Endothelial cell of umbilical vein (primary cell): ENCODE measurements at regions of chr20 and their contacts with region 1.

Region 1: DNA sequence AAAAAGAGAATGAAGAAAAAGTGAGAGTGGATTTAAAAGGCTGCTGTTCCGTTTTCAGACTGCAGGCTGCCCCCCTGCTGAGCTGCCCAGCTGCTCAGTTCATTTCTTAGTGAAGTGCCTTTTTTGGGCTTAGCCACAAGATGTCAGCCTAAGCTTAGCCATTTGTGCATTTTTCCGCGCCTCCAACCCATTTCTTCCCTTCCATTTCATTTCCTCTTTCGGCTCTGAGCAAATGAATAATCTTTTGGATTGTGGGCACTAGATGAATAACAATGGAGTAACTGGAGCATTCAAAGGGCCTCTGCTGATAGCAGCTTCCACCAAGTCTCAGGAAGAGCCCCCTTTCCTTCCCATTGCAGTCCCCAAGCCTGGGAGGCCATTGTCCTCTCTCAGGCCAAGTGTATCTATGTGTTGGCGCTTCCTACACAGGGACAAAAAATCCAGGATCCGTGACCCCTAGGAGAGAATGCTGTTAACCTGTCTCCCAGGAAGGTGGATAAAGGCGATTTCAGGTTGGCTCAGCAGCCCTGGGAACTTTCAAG is 83.5 kb upstream of the SPTLC3 start:
- DNase-seq: peak; percentile 81
- H3K4me3 ChIP-seq: no peak overlapping the region
- H3K27ac ChIP-seq: no peak overlapping the region
- H3K4me1 ChIP-seq: peaks cover 29% of the 10 kb centered on the region
- H3K27me3 ChIP-seq: peaks cover 2 to 3% of the 10 kb centered on the region in 2 experiments
- CTCF ChIP-seq: peak; percentile 90 to 96
- POLR2A ChIP-seq: no peak

Region 2: DNA sequence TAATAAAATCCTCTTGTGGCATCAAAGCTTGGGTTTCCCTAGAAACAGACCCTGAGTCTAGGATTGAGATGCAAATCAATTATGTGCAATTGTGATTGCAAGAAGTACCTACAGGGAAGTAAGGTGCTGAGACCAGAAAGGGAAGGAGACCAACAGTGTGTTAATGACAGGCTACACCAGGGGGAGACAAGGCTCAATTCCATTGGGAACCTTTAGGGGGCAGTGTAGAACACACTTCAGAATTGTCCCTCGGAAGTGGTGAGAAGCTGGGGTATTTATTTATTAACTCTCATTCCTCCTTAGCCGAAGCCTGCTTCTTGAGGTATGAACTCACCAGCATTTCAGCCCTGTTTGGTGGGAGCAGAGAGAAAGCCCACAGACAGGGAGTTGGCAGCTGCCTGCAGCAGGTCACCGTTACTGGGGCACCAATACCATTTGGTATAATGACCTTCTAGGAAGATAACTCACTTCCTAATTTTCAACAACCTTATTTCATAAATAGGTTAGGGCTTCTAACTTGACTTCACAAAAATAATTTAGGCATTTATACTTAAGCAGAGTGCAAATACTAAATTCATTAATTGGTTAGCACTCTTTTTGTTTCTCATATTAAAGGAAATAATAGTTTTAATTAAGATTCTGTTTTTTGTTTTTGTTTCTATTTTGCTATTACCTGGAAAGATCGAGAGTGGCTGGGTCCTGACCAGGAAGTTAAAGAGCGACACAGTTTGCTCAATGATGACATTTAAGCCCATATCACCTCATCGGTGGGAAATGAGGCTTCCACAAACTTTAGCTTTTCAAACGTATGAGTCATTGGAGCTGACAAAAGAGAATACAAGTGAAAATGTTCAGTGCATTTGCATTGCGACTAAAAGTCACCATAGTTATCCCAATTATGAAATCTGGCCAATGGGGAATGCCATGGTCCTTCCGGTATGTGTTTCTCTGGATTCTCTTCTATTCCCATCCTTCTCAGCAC is 912.8 kb before region 1 on chr20:
- CTCF ChIA-PET with region 1: interaction called, 8 read pairs
- POLR2A ChIA-PET with region 1: no interaction called
- dilution Hi-C with region 1: no loop called
- intact Hi-C with region 1: loop called (anchors 5 kb)
- DNase-seq: peak; percentile 70
- H3K4me3 ChIP-seq: no peak overlapping the region
- H3K27ac ChIP-seq: no peak overlapping the region
- H3K4me1 ChIP-seq: peaks cover 2% of the 10 kb centered on the region
- H3K27me3 ChIP-seq: no peaks in the 10 kb centered on the region
- CTCF ChIP-seq: peak; percentile 94 to 100
- POLR2A ChIP-seq: no peak

Region 3: GRCh38 chr20:12798286-12798685 is 127.0 kb before region 1 on chr20:
- CTCF ChIA-PET with region 1: no interaction called
- POLR2A ChIA-PET with region 1: no interaction called
- dilution Hi-C with region 1: no loop called
- intact Hi-C with region 1: no loop called
- DNase-seq: no peak
- H3K4me3 ChIP-seq: no peak overlapping the region
- H3K27ac ChIP-seq: no peak overlapping the region
- H3K4me1 ChIP-seq: no peaks in the 10 kb centered on the region
- H3K27me3 ChIP-seq: no peaks in the 10 kb centered on the region
- CTCF ChIP-seq: no peak
- POLR2A ChIP-seq: no peak

Region 4: DNA sequence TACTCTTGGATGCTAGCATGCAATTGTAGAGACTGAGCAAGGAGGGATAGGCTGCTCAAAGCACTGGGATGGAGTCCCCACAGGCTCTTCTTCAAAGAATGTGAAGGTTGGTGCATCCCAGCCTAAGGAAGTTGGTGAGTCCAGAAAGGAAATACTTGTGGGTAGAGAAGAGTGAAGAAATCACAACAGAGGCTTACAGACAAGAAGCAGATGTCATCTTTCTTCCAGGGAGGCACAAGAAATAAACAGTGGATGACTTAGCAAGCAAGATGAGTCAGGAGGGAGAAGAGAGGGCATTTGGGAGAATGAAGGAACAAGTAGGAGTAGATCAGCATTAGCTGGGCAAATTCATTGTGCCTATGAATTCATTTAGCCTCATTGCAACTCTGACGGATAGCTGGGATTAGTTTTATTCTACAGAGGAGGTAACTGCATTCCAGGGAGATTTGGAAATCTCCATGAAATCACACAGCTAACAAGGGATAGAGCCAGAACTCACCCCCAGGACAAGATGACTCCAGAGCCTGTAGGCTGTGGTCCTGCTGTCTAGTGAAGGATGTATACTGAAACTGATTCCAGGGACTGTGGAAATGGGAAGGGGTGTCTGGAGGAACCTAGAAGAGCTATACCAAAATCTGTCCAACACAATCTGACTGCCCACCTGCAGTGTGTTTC is 42.3 kb before region 1 on chr20:
- CTCF ChIA-PET with region 1: no interaction called
- POLR2A ChIA-PET with region 1: no interaction called
- dilution Hi-C with region 1: no loop called
- intact Hi-C with region 1: no loop called
- DNase-seq: no peak
- H3K4me3 ChIP-seq: no peak overlapping the region
- H3K27ac ChIP-seq: no peak overlapping the region
- H3K4me1 ChIP-seq: no peaks in the 10 kb centered on the region
- H3K27me3 ChIP-seq: no peaks in the 10 kb centered on the region
- CTCF ChIP-seq: no peak
- POLR2A ChIP-seq: no peak

Region 5: GRCh38 chr20:13061381-13061780 is 136.1 kb after region 1 on chr20:
- CTCF ChIA-PET with region 1: no interaction called
- POLR2A ChIA-PET with region 1: no interaction called
- dilution Hi-C with region 1: no loop called
- intact Hi-C with region 1: no loop called
- DNase-seq: no peak
- H3K4me3 ChIP-seq: no peak overlapping the region
- H3K27ac ChIP-seq: no peak overlapping the region
- H3K4me1 ChIP-seq: no peaks in the 10 kb centered on the region
- H3K27me3 ChIP-seq: no peaks in the 10 kb centered on the region
- CTCF ChIP-seq: no peak
- POLR2A ChIP-seq: no peak

Region 6: GRCh38 chr20:13105864-13106457 is 180.7 kb after region 1 on chr20:
- CTCF ChIA-PET with region 1: interaction called, 38 read pairs
- POLR2A ChIA-PET with region 1: no interaction called
- dilution Hi-C with region 1: no loop called
- intact Hi-C with region 1: loop called (anchors 1 kb)
- DNase-seq: peak; percentile 34
- H3K4me3 ChIP-seq: no peak overlapping the region
- H3K27ac ChIP-seq: no peak overlapping the region
- H3K4me1 ChIP-seq: no peaks in the 10 kb centered on the region
- H3K27me3 ChIP-seq: peaks cover 0 to 7% of the 10 kb centered on the region in 2 experiments
- CTCF ChIP-seq: peak; percentile 29 to 49
- POLR2A ChIP-seq: no peak

Region 7: GRCh38 chr20:13261460-13262301 is 336.4 kb after region 1 on chr20:
- CTCF ChIA-PET with region 1: interaction called, 11 read pairs
- POLR2A ChIA-PET with region 1: no interaction called
- dilution Hi-C with region 1: no loop called
- intact Hi-C with region 1: loop called (anchors 1 kb)
- DNase-seq: peak; percentile 49
- H3K4me3 ChIP-seq: no peak overlapping the region
- H3K27ac ChIP-seq: no peak overlapping the region
- H3K4me1 ChIP-seq: peaks cover 12% of the 10 kb centered on the region
- H3K27me3 ChIP-seq: peaks cover 0 to 2% of the 10 kb centered on the region in 2 experiments
- CTCF ChIP-seq: peak; percentile 88 to 92
- POLR2A ChIP-seq: no peak

Region 8: GRCh38 chr20:13302647-13303450 is 377.6 kb after region 1 on chr20:
- CTCF ChIA-PET with region 1: interaction called, 24 read pairs
- POLR2A ChIA-PET with region 1: no interaction called
- dilution Hi-C with region 1: no loop called
- intact Hi-C with region 1: loop called (anchors 1 kb)
- DNase-seq: peak; percentile 21
- H3K4me3 ChIP-seq: no peak overlapping the region
- H3K27ac ChIP-seq: no peak overlapping the region
- H3K4me1 ChIP-seq: no peaks in the 10 kb centered on the region
- H3K27me3 ChIP-seq: peaks cover 3 to 4% of the 10 kb centered on the region in 2 experiments
- CTCF ChIP-seq: peak; percentile 75 to 81
- POLR2A ChIP-seq: no peak

Region 9: DNA sequence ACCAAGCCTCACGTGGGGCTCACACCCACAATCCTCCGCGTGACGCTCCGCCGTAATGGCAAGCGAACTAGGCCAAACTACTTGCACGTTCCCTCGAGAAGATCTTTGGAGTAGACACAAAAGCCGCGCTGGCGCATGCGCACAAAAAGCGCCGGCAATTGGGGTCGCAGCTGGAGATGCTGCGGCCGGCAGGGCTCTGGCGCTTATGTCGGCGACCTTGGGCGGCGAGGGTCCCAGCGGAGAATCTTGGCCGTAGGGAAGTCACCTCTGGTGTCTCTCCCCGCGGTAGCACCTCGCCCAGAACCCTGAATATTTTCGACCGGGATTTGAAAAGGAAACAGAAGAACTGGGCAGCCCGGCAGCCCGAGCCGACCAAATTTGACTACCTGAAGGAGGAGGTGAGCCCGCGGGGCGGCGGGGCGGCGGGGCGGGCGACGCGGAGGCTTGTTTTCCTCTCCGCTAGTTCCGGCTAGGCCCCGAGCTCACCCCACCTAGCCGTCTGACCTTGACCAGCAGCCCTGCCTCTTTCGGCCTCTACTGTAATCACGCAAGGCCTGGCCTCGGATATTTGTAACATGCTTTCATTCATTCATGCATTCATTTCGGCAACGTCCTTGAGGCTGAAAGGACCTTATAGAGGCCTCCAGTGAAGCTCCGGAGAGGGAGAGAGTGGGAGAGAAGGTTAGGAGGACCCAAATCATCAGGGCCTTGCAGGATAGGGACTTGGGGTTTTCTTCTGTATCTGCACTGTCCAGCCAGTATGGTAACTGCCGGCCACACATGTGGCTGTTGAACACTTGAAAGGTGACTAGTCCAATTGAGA is 859.8 kb after region 1 on chr20 and contains the starts of genes ESF1 and NDUFAF5:
- CTCF ChIA-PET with region 1: interaction called, 14 read pairs
- POLR2A ChIA-PET with region 1: no interaction called
- dilution Hi-C with region 1: no loop called
- intact Hi-C with region 1: loop called (anchors 5 kb)
- DNase-seq: peak; percentile 98
- H3K4me3 ChIP-seq: peak within 1 kb of the TSS; percentile 68 to 96 (median 83)
- H3K27ac ChIP-seq: peak within 1 kb of the TSS; percentile 60
- H3K4me1 ChIP-seq: peaks cover 16% of the 10 kb centered on the region
- H3K27me3 ChIP-seq: no peaks in the 10 kb centered on the region
- CTCF ChIP-seq: no peak
- POLR2A ChIP-seq: no peak
- total RNA-seq, gene ESF1: 15.2 and 15.5 TPM in 2 replicates
- total RNA-seq, gene NDUFAF5: 26.4 and 28.4 TPM in 2 replicates